ENCODE measurements at regions of chr1 and their contacts with region 1.

Region 1: GRCh38 chr1:172322219-172323061 is 98.0 kb upstream of the C1orf105 start:
- DNase-seq: peak; percentile 35 to 87
- H3K4me3 ChIP-seq: peak overlapping the region; percentile 5 to 52
- H3K27ac ChIP-seq: peak overlapping the region; percentile 91 to 92
- H3K4me1 ChIP-seq: peaks cover 0 to 23% of the 10 kb centered on the region in 2 donors
- H3K27me3 ChIP-seq: no peaks in the 10 kb centered on the region
- CTCF ChIP-seq: peak in 1 of 3 experiments; percentile 15

Region 2: DNA sequence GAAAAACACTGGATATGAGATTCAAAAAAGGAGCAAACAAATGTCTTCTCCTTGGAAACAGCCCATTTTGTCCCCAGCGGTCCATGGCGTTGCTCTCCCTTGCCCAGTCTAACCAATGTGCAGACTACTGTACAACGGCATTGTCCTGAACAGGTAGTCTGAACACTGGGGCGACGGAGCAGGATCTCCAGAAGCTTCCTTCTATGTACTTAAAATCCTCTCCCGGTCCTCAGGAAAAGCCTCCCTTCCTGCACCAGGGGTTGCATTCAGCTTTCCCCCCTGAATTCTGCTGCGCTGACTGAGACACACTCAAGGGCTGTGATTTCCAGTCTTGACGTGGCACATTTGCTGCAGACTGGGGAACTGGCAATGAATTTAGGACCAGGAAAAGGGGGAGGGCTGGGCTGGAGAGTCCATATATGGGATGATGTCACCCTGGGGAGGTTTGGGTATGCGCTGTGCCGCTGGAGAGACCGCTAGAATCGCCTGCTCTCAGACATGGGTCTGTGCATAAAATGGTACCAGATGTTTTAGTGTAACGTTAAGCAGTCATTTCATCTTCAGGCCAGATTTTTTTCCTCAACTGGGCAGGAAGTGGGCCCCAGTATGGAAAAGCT is 177.9 kb before region 1 on chr1:
- intact Hi-C with region 1: loop called (anchors 2 kb)
- DNase-seq: peak; percentile 69 to 94
- H3K4me3 ChIP-seq: peak overlapping the region; percentile 61 to 85
- H3K27ac ChIP-seq: peak overlapping the region; percentile 92 to 95
- H3K4me1 ChIP-seq: peaks cover 0 to 4% of the 10 kb centered on the region in 2 donors
- H3K27me3 ChIP-seq: no peaks in the 10 kb centered on the region
- CTCF ChIP-seq: no peak

Region 3: GRCh38 chr1:172254521-172255222 is 67.8 kb before region 1 on chr1:
- intact Hi-C with region 1: loop called (anchors 1 kb)
- DNase-seq: no peak
- H3K4me3 ChIP-seq: no peak overlapping the region
- H3K27ac ChIP-seq: peak overlapping the region in 1 of 2 donors; percentile 62
- H3K4me1 ChIP-seq: peaks cover 0 to 11% of the 10 kb centered on the region in 2 donors
- H3K27me3 ChIP-seq: no peaks in the 10 kb centered on the region
- CTCF ChIP-seq: no peak

Region 4: GRCh38 chr1:172286629-172287076 is 35.8 kb before region 1 on chr1:
- intact Hi-C with region 1: loop called (anchors 2 kb)
- DNase-seq: peak in 1 of 2 donors; percentile 66
- H3K4me3 ChIP-seq: peak overlapping the region in 1 of 2 donors; percentile 3
- H3K27ac ChIP-seq: peak overlapping the region; percentile 4 to 45
- H3K4me1 ChIP-seq: peaks cover 0 to 8% of the 10 kb centered on the region in 2 donors
- H3K27me3 ChIP-seq: no peaks in the 10 kb centered on the region
- CTCF ChIP-seq: no peak

Region 5: GRCh38 chr1:172357753-172358385 is 35.4 kb after region 1 on chr1:
- intact Hi-C with region 1: loop called (anchors 1 kb)
- DNase-seq: no peak
- H3K4me3 ChIP-seq: peak overlapping the region; percentile 10 to 52
- H3K27ac ChIP-seq: peak overlapping the region; percentile 86
- H3K4me1 ChIP-seq: peaks cover 3 to 14% of the 10 kb centered on the region in 2 donors
- H3K27me3 ChIP-seq: no peaks in the 10 kb centered on the region
- CTCF ChIP-seq: no peak

Region 6: GRCh38 chr1:172532700-172533509 is 210.5 kb after region 1 on chr1 and contains the start of gene SUCO:
- intact Hi-C with region 1: loop called (anchors 2 kb)
- DNase-seq: peak; percentile 100
- H3K4me3 ChIP-seq: peak within 1 kb of the TSS; percentile 80 to 83
- H3K27ac ChIP-seq: peak within 1 kb of the TSS; percentile 95 to 98
- H3K4me1 ChIP-seq: peaks cover 4 to 10% of the 10 kb centered on the region in 2 donors
- H3K27me3 ChIP-seq: no peaks in the 10 kb centered on the region
- CTCF ChIP-seq: peak in 1 of 3 experiments; percentile 5
- total RNA-seq, gene SUCO: 7.8 TPM

Measured in ascending aorta (tissue), 2 donors.